ENCODE measurements at regions of chr7 and their contacts with region 1.

Region 1: GRCh38 chr7:115707258-115708012 is 323.1 kb downstream of the TFEC start:
- DNase-seq: peak; percentile 47
- H3K4me3 ChIP-seq: no peak overlapping the region
- H3K27ac ChIP-seq: no peak overlapping the region
- H3K4me1 ChIP-seq: no peaks in the 10 kb centered on the region
- H3K27me3 ChIP-seq: no peaks in the 10 kb centered on the region
- CTCF ChIP-seq: peak; percentile 46

Region 2: DNA sequence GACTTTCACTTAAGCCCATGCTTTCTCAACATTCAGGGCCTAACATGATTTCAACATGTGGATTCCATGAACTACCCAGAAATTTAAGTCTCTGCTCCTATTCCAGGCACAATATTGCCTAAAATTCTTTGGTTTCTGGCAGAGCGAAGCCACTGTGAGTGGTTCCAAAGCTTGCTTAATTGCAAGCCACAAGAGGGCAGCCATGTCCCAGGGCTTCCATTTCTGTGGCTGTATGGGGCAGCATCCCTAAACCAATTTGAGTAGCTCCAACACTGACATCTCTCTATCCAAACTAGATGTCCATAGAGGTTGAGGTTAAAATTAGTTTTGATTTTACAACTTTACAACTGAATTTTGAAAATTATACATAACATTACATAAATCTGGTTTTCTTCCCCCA is 841.9 kb before region 1 on chr7:
- intact Hi-C with region 1: loop called (anchors 10 kb)
- DNase-seq: peak; percentile 46
- H3K4me3 ChIP-seq: no peak overlapping the region
- H3K27ac ChIP-seq: no peak overlapping the region
- H3K4me1 ChIP-seq: no peaks in the 10 kb centered on the region
- H3K27me3 ChIP-seq: no peaks in the 10 kb centered on the region
- CTCF ChIP-seq: peak; percentile 68

Region 3: GRCh38 chr7:115086146-115086841 is 621.1 kb before region 1 on chr7:
- intact Hi-C with region 1: no loop called
- DNase-seq: no peak
- H3K4me3 ChIP-seq: no peak overlapping the region
- H3K27ac ChIP-seq: no peak overlapping the region
- H3K4me1 ChIP-seq: no peaks in the 10 kb centered on the region
- H3K27me3 ChIP-seq: no peaks in the 10 kb centered on the region
- CTCF ChIP-seq: no peak

Region 4: GRCh38 chr7:115618676-115619075 is 88.8 kb before region 1 on chr7:
- intact Hi-C with region 1: no loop called
- DNase-seq: no peak
- H3K4me3 ChIP-seq: no peak overlapping the region
- H3K27ac ChIP-seq: no peak overlapping the region
- H3K4me1 ChIP-seq: no peaks in the 10 kb centered on the region
- H3K27me3 ChIP-seq: no peaks in the 10 kb centered on the region
- CTCF ChIP-seq: no peak

Measured in colonic mucosa (tissue), 4 donors.